Right ventricle myocardium superior (tissue), 1 donor: ENCODE measurements at regions of chr11 and their contacts with region 1.

Region 1: GRCh38 chr11:2360081-2360642 is 16.9 kb upstream of the CD81 start:
- DNase-seq: no peak
- ATAC-seq: no peak

Region 2: DNA sequence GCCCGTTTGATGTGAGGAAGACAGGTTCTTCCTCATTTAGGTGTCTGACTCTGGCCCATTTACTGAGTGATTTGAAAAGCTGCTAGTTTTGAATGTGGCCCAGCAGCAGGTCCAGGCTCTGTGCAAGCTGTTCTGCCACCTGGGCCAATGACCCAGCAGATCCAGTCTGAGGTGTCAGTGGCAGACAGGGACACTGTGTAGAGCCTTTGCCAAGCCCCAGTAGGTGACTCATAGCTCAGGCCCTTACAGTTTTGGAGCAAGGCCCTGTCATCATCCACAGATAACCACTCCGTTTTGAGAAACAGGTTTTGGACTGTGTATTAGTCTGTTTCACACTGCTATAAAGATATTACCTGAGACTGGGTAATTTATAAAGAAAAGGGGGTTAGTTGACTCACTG is 34.4 kb before region 1 on chr11:
- intact Hi-C with region 1: loop called (anchors 5 kb)
- DNase-seq: peak; percentile 65
- ATAC-seq: peak; percentile 97

Region 3: GRCh38 chr11:2420502-2421225 is 60.5 kb after region 1 on chr11:
- intact Hi-C with region 1: no loop called
- DNase-seq: peak; percentile 83
- ATAC-seq: peak; percentile 97

Region 4: GRCh38 chr11:2498750-2499149 is 138.6 kb after region 1 on chr11:
- intact Hi-C with region 1: no loop called
- DNase-seq: no peak
- ATAC-seq: no peak

Region 5: DNA sequence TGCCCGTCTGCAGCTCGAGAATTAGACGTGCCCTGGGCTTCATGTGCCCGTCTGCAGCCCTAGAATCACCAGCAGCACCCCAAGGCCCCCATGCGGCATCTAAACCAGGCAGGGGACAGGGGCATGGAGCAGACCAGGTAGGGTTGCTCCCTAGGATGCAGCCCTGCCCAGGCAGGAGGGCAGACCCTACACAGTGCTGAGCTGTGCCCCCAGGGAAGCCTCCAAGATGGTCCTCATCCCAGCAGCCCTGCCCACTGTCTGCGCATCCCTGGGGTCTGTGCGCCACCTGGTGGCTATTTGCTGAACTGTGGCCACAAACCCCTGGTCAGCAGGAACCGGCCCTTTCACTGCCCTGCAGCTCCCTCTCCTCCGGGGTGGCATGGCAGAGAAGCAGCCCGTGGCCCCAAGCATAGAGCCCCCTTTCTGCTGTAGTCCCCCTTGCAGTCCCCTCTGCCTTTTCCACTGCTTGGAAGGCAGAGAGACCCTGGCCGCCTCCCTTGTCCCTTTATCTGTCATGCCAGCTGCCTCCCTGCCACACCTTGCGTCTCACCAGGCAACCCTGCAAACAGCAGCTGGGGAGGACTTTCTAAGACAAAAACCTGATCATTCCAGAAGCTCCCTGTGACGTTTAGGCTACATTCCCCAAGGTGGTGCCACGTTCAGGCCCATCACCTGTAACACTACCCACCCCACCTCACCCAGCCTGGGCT is 171.3 kb after region 1 on chr11:
- intact Hi-C with region 1: no loop called
- DNase-seq: peak; percentile 90
- ATAC-seq: peak; percentile 76